Caco-2 (cell line): ENCODE measurements at regions of chr6 and their contacts with region 1.

Region 1: GRCh38 chr6:47097092-47097945 is 55.2 kb upstream of the ADGRF1 start:
- DNase-seq: peak; percentile 71 to 78
- H3K4me3 ChIP-seq: no peak overlapping the region
- H3K4me3 Mint-ChIP-seq: no peak overlapping the region
- H3K27ac Mint-ChIP-seq: no peak overlapping the region
- H3K4me1 ChIP-seq: peaks cover 54% of the 10 kb centered on the region
- H3K4me1 Mint-ChIP-seq: peaks cover 25% of the 10 kb centered on the region
- H3K27me3 ChIP-seq: no peaks in the 10 kb centered on the region
- H3K27me3 Mint-ChIP-seq: no peaks in the 10 kb centered on the region
- CTCF ChIP-seq: peak; percentile 77 to 80

Region 2: GRCh38 chr6:47134476-47135189 is 37.3 kb after region 1 on chr6:
- CTCF ChIA-PET with region 1: no interaction called
- POLR2A ChIA-PET with region 1: no interaction called
- intact Hi-C with region 1: loop called (anchors 2 kb)
- DNase-seq: peak; percentile 54 to 61
- H3K4me3 ChIP-seq: no peak overlapping the region
- H3K4me3 Mint-ChIP-seq: peak overlapping the region; percentile 52
- H3K27ac Mint-ChIP-seq: peak overlapping the region; percentile 81
- H3K4me1 ChIP-seq: peaks cover 53% of the 10 kb centered on the region
- H3K4me1 Mint-ChIP-seq: peaks cover 48% of the 10 kb centered on the region
- H3K27me3 ChIP-seq: no peaks in the 10 kb centered on the region
- H3K27me3 Mint-ChIP-seq: no peaks in the 10 kb centered on the region
- CTCF ChIP-seq: no peak

Region 3: DNA sequence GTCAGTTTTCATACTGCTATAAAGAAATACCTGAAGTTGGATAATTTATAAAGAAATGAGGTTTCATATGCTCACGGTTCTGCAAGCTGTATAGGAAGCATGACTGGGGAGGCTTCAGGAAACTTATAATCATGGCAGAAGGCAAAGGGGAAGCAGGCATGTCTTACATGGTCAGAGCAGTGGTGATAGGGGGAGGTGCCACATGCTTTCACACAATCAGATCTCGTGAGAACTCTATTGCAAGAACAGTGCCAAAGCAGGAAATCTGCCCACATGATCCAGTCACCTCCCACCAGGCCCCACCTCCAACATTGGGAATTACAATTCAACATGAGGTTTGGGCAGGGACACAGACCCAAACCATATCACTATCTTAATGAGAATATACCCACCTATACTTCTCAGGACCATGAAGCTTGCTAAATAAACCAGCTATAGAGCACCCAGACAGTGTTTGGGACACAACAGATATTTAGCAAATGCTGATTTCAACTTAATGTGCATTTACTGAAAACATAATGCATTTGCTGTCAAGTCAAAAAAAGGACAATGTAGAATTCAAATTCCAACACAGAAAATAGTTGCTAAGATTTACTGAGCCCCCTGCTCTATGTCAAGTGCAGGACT is 148.5 kb after region 1 on chr6:
- CTCF ChIA-PET with region 1: interaction called, 4 read pairs
- POLR2A ChIA-PET with region 1: no interaction called
- intact Hi-C with region 1: loop called (anchors 1 kb)
- DNase-seq: no peak
- H3K4me3 ChIP-seq: no peak overlapping the region
- H3K4me3 Mint-ChIP-seq: no peak overlapping the region
- H3K27ac Mint-ChIP-seq: no peak overlapping the region
- H3K4me1 ChIP-seq: peaks cover 34% of the 10 kb centered on the region
- H3K4me1 Mint-ChIP-seq: peaks cover 25% of the 10 kb centered on the region
- H3K27me3 ChIP-seq: no peaks in the 10 kb centered on the region
- H3K27me3 Mint-ChIP-seq: no peaks in the 10 kb centered on the region
- CTCF ChIP-seq: no peak

Region 4: DNA sequence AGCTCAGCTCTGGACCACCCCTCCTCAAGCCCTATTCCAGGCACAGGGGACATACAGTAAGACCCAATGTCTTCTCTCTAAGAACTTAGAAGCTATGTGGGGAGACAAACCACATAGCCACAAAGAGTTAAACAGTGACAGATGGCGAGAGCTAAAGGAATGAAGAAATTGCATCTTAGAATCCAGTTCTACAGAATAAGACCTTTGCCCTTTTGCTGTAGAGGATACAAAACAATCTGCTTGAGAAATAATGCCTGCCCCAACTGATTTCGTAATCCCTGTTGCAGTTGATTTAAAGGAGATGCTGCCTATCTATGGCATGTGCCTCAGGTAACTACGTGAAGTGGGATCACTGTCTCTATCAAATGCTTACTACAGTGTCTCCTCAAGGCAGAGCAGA is 181.2 kb after region 1 on chr6:
- CTCF ChIA-PET with region 1: no interaction called
- POLR2A ChIA-PET with region 1: no interaction called
- intact Hi-C with region 1: loop called (anchors 1 kb)
- DNase-seq: peak; percentile 75 to 77
- H3K4me3 ChIP-seq: no peak overlapping the region
- H3K4me3 Mint-ChIP-seq: peak overlapping the region; percentile 9
- H3K27ac Mint-ChIP-seq: peak overlapping the region; percentile 83
- H3K4me1 ChIP-seq: peaks cover 35% of the 10 kb centered on the region
- H3K4me1 Mint-ChIP-seq: peaks cover 24% of the 10 kb centered on the region
- H3K27me3 ChIP-seq: no peaks in the 10 kb centered on the region
- H3K27me3 Mint-ChIP-seq: no peaks in the 10 kb centered on the region
- CTCF ChIP-seq: no peak

Region 5: DNA sequence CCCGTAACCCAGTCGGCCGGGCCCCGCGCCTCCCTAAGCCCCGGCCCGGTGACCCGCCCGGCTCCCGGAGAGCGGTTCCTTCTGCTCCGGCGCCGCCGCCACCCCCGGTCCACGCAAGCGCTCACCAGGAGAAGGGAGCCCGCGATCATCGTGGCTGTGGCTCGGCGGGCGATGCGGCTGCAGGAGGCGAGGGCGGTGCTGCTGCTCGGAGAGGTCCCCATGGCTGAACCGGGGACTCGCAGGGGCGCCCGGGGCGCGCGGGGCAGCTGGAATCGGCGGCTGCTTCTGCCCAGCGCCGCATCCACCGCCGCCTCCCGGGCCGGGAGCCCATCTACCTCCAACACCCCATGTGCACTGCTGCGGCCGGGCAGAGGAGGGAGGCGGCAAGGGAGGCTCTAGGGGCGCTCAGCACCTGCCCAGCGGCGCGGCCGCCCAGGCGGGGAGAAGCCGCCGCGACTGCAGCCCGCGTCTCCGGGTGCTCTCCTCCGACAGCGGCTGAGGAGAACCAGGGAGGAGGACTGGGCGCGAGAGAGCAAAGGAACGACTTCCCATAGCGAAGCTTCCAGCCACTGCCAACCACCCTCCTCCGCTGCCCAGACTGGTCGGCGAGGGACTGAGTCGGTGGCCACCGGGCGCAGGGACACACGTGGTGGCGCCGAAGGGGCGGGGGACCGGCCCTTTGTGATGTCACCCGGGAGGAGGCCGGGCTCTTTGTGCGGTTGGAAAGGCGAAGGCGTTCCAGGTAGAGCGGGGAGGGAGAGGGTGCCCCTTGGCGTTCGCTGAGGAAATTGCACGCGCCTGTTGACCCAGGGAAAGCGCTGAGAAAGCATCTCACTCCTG is 212.2 kb after region 1 on chr6 and contains the start of gene TNFRSF21:
- CTCF ChIA-PET with region 1: interaction called, 3 read pairs
- POLR2A ChIA-PET with region 1: no interaction called
- intact Hi-C with region 1: loop called (anchors 1 kb)
- DNase-seq: peak; percentile 93 to 95
- H3K4me3 ChIP-seq: peak within 1 kb of the TSS; percentile 91
- H3K4me3 Mint-ChIP-seq: peak within 1 kb of the TSS; percentile 88
- H3K27ac Mint-ChIP-seq: peak within 1 kb of the TSS; percentile 80
- H3K4me1 ChIP-seq: peaks cover 33% of the 10 kb centered on the region
- H3K4me1 Mint-ChIP-seq: peaks cover 18% of the 10 kb centered on the region
- H3K27me3 ChIP-seq: no peaks in the 10 kb centered on the region
- H3K27me3 Mint-ChIP-seq: no peaks in the 10 kb centered on the region
- CTCF ChIP-seq: peak; percentile 92 to 96
- total RNA-seq, gene TNFRSF21: 60.8 and 64.4 TPM in 2 replicates

Region 6: DNA sequence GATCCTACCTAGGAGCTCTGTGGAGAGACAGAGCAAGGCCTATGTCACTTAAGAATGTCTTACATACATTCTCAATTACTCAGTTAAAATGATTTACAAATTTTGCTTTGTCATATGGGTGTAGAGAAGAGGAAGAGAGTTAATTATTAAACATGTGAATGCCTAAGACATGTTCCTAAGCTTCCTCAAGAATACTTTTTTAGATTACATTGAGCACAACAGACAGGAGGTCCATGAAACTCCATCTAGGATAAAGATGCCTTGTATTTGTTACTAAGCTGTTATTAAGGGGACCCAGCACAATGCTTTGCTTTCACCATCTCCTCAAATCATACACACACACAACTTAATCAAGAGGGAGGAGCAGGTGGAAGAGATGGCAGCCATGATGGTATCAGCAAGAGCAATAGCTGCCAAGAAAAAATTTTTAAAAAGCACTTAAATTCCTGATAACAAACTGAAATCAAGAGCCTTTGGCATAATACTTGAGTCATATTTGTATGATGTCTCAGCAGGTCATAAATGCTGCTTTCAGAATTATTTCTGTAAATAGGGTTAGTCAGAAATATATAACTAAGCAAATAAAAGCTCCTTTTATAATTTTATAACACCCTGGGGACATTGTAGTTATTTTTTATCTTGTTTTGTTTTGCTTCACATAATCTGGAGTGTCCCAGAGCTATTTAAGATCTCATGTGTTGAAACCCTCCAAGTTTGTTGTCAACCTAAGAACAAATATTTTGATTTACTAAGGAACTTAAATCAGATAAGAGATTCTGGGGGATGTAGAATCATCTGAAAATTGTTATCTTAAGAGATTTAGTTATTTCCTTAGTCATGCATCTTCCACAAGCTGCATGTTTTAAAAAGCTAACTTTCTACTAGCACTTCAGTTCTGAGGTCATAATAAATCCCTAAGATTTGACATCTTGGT is 310.3 kb after region 1 on chr6:
- CTCF ChIA-PET with region 1: no interaction called
- POLR2A ChIA-PET with region 1: no interaction called
- intact Hi-C with region 1: loop called (anchors 5 kb)
- DNase-seq: no peak
- H3K4me3 ChIP-seq: no peak overlapping the region
- H3K4me3 Mint-ChIP-seq: no peak overlapping the region
- H3K27ac Mint-ChIP-seq: peak overlapping the region; percentile 74
- H3K4me1 ChIP-seq: peaks cover 46% of the 10 kb centered on the region
- H3K4me1 Mint-ChIP-seq: peaks cover 12% of the 10 kb centered on the region
- H3K27me3 ChIP-seq: no peaks in the 10 kb centered on the region
- H3K27me3 Mint-ChIP-seq: no peaks in the 10 kb centered on the region
- CTCF ChIP-seq: no peak